Activated CD4-positive, alpha-beta T cell treated with anti-CD3 and anti-CD28 coated beads, Interleukin-2, amount 10 ng/mL, durations not matched to agents 7 days and 5 days (primary cell): ENCODE measurements at regions of chr7 and their contacts with region 1.

Region 1: DNA sequence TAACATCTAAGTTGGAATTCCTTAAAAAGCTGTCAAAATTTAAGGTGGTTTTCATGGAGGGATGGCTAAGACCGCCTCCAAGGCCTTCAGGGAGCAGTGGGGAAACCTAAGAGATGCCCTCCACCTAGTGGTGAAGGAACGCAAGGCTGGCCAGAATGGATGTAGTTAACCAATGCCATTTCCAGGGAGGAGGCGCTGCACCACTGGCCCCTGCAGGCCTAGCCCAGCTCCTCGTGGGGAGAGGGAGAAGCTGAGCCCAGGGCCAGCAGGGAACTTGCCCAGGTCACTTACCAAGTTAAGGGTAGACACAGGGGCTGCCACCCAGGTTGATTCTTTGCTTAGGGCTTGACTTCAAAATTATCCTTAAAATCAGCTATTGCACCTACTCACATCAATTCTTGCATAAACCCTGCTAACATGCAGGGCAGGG is 32.0 kb downstream of the FIGNL1 start:
- DNase-seq: peak; percentile 85
- H3K4me3 Mint-ChIP-seq: no peak overlapping the region
- H3K27ac Mint-ChIP-seq: no peak overlapping the region
- H3K4me1 Mint-ChIP-seq: peaks cover 30% of the 10 kb centered on the region
- H3K27me3 Mint-ChIP-seq: no peaks in the 10 kb centered on the region

Region 2: DNA sequence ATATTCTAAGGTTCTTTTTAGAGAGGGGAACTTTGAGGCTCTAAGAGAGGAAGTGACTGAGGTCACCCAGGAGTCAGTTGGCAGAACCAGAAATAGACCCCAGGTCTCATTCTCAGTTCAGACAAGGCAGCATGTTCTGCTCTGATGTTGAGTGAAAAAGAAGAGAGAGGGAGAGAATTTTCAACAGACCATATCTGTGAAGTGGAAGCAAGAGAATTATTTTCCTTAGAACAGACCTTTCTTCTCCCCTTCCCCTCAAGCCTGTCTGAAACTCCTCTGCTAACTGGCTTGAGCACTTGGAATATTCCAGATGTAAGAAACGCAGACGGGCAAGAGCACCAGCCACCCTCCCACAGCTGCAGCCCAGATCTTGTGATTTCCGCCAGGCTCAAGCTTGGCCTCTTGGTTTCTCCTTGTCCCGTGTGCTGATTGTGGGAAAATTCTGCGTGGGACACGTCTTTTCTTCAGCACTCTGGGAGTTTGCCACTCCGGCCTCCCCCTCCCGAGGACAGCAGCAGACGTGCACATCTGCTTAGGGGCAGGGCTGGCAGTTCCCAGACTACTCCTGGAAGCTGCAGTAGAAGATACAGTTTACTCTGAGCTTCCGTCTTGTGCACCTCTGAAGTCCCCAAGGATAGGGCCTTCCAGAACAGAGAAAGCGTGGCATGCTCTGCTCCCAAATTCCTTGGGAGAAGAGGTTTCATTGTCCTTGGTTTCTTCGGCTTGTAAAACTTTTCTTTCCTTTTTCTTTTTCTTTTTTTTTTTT is 136.2 kb before region 1 on chr7:
- CTCF ChIA-PET with region 1: no interaction called
- POLR2A ChIA-PET with region 1: no interaction called
- DNase-seq: no peak
- H3K4me3 Mint-ChIP-seq: peak overlapping the region; percentile 30
- H3K27ac Mint-ChIP-seq: peak overlapping the region; percentile 80
- H3K4me1 Mint-ChIP-seq: peaks cover 45% of the 10 kb centered on the region
- H3K27me3 Mint-ChIP-seq: peaks cover 2% of the 10 kb centered on the region

Region 3: DNA sequence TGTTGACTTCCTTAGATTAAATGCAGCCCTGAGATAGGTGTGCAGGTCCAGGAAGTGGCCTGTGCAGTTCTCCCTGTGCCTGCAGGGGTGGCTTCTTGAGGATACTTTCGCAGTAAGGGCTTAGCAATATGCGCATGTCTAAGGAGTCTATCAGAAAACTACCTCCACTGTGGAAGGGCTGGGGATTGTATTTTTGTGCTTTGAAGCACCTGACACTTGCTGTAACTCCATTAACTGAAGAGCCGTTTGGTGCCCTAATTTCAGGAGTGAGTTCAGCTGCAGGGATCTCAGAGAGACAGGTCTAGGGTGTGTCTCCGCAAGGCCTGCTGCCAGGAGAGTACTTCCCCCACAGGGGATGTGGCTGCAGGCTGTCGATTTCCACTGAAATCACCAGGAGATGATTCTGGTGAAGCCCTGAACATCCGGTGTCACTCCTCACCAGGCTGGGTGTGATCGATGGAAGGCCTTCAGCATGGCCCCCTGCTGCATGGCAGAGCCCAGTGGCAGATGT is 78.1 kb before region 1 on chr7:
- CTCF ChIA-PET with region 1: no interaction called
- POLR2A ChIA-PET with region 1: no interaction called
- DNase-seq: peak; percentile 76
- H3K4me3 Mint-ChIP-seq: no peak overlapping the region
- H3K27ac Mint-ChIP-seq: no peak overlapping the region
- H3K4me1 Mint-ChIP-seq: peaks cover under 1% of the 10 kb centered on the region
- H3K27me3 Mint-ChIP-seq: no peaks in the 10 kb centered on the region

Region 4: GRCh38 chr7:50382455-50382854 is 35.6 kb before region 1 on chr7:
- CTCF ChIA-PET with region 1: no interaction called
- POLR2A ChIA-PET with region 1: no interaction called
- DNase-seq: no peak
- H3K4me3 Mint-ChIP-seq: no peak overlapping the region
- H3K27ac Mint-ChIP-seq: peak overlapping the region; percentile 60
- H3K4me1 Mint-ChIP-seq: peaks cover 74% of the 10 kb centered on the region
- H3K27me3 Mint-ChIP-seq: no peaks in the 10 kb centered on the region

Region 5: DNA sequence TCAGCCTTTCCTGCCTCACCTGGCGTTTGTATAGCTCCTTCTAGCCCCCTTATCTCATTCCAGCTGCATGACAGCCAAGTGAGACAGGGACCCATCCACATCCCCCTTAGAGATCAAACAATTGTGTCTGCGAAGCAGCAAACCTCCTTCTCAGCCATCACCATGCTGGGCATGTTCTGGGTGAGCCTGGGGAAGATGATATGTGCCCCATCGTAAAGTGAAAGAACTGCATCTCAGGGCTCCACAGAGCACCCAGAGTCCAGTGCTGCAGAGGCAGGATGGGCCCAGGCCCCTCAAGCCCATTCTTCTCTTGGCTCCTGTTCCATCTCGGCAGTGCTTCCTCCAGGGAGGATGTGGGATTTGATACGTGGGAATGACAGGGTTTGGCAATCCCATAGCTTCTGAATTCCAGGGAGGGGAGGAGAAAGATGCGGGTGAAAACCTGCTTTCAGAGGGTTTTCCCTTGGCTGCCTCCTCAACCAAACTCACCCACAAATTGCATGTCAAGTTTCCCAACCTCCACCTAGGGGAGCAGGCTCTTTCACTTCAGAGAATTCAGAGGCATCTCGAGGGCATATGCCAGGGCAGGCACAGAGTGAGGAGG is 11.1 kb before region 1 on chr7:
- CTCF ChIA-PET with region 1: interaction called, 12 read pairs
- POLR2A ChIA-PET with region 1: interaction called, 3 read pairs
- DNase-seq: no peak
- H3K4me3 Mint-ChIP-seq: no peak overlapping the region
- H3K27ac Mint-ChIP-seq: peak overlapping the region; percentile 44
- H3K4me1 Mint-ChIP-seq: peaks cover 52% of the 10 kb centered on the region
- H3K27me3 Mint-ChIP-seq: no peaks in the 10 kb centered on the region

Region 6: DNA sequence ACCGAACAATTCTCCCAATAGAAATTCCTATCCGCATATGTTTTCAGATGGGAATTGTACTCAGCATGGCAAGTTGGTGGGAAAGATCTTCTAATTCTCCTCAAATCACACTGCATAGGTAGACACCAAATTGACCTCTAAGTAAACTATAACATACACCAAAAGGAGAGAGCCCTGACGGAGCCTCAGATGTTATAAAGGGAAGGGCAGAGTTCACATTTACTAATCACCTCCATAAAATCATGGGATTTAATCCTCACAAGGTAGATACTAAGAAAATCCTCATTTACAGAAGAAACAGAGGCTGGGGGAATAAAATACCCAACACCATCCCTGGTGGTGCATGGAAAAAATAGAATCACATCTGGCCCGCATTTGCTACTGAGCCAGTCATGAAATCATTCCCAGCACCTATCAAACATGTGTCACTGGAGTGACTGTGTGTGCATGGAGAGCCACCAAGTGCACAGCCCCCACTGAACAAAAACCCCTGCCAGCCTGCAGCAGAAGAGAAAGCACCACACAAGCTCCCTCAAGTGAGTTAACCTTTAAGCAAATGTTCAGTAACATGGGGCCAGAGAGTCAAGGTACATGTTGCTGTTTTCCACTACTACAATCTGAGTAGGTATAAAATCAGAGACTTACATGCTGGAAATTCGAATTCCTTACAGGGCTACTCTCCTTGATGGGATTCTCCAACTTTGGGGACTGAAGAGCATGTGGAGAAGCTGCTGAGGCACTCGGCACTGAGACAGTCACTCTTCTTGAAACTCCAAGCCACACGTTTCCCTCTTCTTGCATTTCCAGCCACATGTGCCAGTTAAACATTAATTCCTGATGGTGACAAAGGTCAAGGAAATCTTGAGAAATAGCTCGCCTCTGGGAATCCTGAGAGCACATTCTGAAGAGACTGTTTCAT is 146.8 kb after region 1 on chr7 and contains the start of gene DDC:
- CTCF ChIA-PET with region 1: no interaction called
- POLR2A ChIA-PET with region 1: no interaction called
- DNase-seq: no peak
- H3K4me3 Mint-ChIP-seq: no peak within 1 kb of the TSS
- H3K27ac Mint-ChIP-seq: no peak within 1 kb of the TSS
- H3K4me1 Mint-ChIP-seq: no peaks in the 10 kb centered on the region
- H3K27me3 Mint-ChIP-seq: peaks cover 14% of the 10 kb centered on the region
- total RNA-seq, gene DDC: not detected